ENCODE measurements at regions of chr13 and their contacts with region 1.

Region 1: GRCh38 chr13:24605923-24606372 is 74.3 kb upstream of the ATP12A start:
- DNase-seq: peak in 1 of 2 experiments; percentile 63
- H3K4me3 ChIP-seq: no peak overlapping the region
- H3K27ac ChIP-seq: no peak overlapping the region
- H3K4me1 ChIP-seq: peaks cover 0 to 3% (median 2%) of the 10 kb centered on the region in 4 experiments; a peak in 3 of 7 replicates
- H3K27me3 ChIP-seq: 0 out of 7 replicates have a peak, but pooled peaks cover 0 to 4% (median 0%) of the 10 kb centered on the region in 4 experiments
- CTCF ChIP-seq: peak in 2 of 3 experiments; percentile 31 to 53; a peak in 2 of 4 replicates
- EP300 ChIP-seq: no peak
- POLR2A ChIP-seq: 0 out of 3 replicates have a peak, but pooled peaks of 1 of the 2 experiments have one; percentile 32
- RAD21 ChIP-seq: peak; percentile 47 to 61; a peak in 3 of 4 replicates

Region 2: DNA sequence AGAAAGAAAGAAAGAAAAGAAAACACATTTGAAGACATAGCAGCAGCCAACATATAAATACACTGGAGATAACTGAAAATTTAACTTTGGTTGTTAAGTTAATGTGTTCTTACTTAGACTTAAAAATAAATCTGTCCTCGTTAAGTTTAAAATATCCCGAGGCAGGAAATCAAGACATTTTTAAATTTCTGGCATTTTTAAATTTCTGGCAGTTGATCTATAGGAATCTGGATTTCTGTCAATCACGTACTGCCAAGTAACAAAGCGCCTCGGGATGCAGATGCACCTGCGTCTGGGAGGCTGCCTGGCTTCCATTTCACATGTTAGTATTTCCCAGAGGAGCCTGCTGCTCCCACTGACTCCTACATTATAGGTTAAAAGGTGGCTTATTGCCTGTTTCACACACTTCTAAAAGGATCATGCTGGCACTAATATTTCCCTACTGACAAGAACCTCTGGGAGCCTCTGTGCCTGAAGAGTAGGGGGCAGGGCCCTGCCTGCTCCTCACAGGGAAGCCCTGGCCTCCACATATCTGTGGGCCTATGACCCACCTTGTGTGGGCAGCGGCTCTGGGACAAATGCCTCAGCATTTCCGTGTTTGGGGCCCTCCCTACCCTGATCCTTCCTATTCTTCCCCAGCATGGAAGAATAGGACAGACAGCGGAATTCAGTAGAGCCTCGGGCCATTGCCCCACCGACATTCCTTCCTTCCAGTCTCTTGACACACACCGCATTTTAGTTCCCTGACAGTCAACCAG is 11.5 kb after region 1 on chr13:
- CTCF ChIA-PET with region 1: interaction called, 141 read pairs
- POLR2A ChIA-PET with region 1: interaction called, 3 read pairs
- DNase-seq: no peak
- H3K4me3 ChIP-seq: no peak overlapping the region
- H3K27ac ChIP-seq: no peak overlapping the region
- H3K4me1 ChIP-seq: peaks cover 0 to 4% (median 0%) of the 10 kb centered on the region in 4 experiments; a peak in 3 of 7 replicates
- H3K27me3 ChIP-seq: no peaks in the 10 kb centered on the region
- CTCF ChIP-seq: no peak
- EP300 ChIP-seq: no peak
- POLR2A ChIP-seq: no peak
- RAD21 ChIP-seq: no peak

Region 3: DNA sequence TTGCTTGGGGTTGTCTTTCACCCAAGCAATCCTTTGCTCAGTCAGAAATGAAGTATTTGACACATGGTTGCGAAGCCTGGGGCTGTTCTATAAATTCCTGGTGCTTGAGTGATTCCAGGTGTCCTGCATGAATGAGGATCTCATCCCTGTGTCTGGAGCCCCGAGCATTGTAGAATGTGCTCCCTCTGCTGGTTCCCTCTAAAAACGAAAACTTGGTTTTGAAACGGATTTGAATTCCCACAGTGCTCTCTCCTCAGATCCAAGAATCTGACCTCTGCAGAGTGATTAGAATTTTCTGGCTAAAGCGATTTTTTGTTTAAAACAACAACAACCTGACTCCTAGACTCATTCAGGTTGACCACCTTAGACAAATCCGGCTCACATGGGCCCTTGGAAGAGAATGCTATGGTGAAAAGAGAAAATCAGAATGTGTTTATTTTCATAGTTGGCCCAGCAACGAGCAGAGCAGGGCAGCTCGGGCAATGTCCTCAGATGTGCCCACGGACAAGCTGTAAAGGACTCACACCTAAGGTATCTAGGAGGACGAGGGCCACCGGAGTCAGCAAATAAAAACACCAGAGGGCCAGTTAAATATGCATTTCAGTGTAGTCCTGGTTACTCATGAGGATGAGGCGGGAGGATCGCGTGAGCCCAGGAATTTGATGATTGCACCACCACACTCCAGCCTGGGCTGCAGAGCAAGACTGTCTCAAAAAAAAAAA is 65.6 kb after region 1 on chr13:
- CTCF ChIA-PET with region 1: interaction called, 24 read pairs
- POLR2A ChIA-PET with region 1: no interaction called
- DNase-seq: no peak
- H3K4me3 ChIP-seq: peak overlapping the region in 1 of 4 experiments; percentile 41; a peak in 3 of 8 replicates
- H3K27ac ChIP-seq: no peak overlapping the region
- H3K4me1 ChIP-seq: peaks cover 0 to 4% (median under 1%) of the 10 kb centered on the region in 4 experiments; a peak in 2 of 7 replicates
- H3K27me3 ChIP-seq: no peaks in the 10 kb centered on the region
- CTCF ChIP-seq: peak; percentile 17 to 79 (median 75)
- EP300 ChIP-seq: no peak
- POLR2A ChIP-seq: no peak
- RAD21 ChIP-seq: peak; percentile 57 to 67

Region 4: DNA sequence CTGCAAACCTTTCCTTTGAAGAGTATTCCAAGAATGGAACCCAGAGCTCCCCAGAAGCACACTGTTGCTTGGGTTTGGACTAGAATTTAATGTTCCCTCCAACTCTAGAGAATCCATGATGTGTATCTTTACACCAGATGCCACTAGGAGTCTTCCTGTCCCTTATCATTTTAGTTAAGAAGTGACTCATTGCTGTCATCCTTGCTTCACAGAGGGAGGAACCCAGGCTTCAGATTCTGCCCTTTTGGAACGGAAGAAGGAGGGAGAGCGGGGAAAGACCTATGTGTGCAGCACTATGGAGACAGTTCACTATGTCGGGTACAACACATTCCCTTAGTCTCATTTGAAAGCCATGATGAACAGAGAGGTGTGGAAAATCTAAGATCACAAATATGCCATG is 72.2 kb after region 1 on chr13:
- CTCF ChIA-PET with region 1: interaction called, 14 read pairs
- POLR2A ChIA-PET with region 1: no interaction called
- DNase-seq: no peak
- H3K4me3 ChIP-seq: no peak overlapping the region
- H3K27ac ChIP-seq: no peak overlapping the region
- H3K4me1 ChIP-seq: peaks cover 0 to 4% (median 1%) of the 10 kb centered on the region in 4 experiments; a peak in 3 of 7 replicates
- H3K27me3 ChIP-seq: peaks cover 3 to 22% (median 18%) of the 10 kb centered on the region in 4 experiments
- CTCF ChIP-seq: no peak
- EP300 ChIP-seq: no peak
- POLR2A ChIP-seq: no peak
- RAD21 ChIP-seq: no peak

Region 5: GRCh38 chr13:24683838-24684599 is 78.1 kb after region 1 on chr13:
- CTCF ChIA-PET with region 1: interaction called, 14 read pairs
- POLR2A ChIA-PET with region 1: no interaction called
- DNase-seq: peak in 1 of 2 experiments; percentile 88
- H3K4me3 ChIP-seq: peak overlapping the region in 1 of 4 experiments; percentile 11; a peak in 1 of 8 replicates
- H3K27ac ChIP-seq: no peak overlapping the region
- H3K4me1 ChIP-seq: peaks cover 8 to 14% (median 12%) of the 10 kb centered on the region in 4 experiments
- H3K27me3 ChIP-seq: peaks cover 3 to 22% (median 18%) of the 10 kb centered on the region in 4 experiments
- CTCF ChIP-seq: peak; percentile 80 to 96 (median 80)
- EP300 ChIP-seq: no peak
- POLR2A ChIP-seq: no peak
- RAD21 ChIP-seq: peak; percentile 58 to 69

Region 6: DNA sequence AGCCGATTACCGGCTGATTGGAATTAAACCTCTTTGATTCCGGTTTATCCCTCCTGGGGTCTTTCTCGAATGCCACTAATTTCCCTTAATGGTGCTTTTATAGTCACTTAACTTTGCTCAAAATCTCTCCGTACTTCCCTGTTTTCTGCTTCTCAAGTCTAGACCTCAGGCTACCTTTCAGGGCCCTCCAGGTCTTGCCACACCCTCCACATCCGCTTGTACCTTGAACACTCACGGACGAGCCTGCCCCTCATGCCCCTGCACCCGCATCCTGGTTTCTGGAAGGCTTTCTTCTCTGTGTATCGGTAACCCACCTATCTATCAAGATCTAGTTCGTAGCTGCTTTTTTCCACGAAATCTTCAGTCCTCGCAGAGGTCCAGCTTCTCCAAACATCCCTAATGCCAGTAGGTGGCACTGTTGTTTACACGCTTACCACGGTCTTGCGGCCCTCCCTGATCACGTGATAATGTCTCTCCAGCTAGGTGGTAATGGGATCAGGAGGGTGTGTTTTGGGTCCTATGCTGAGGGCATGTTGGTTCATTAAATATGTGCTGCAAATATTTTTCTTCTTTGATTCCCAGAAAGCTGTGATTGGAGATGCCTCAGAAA is 88.0 kb after region 1 on chr13:
- CTCF ChIA-PET with region 1: interaction called, 10 read pairs
- POLR2A ChIA-PET with region 1: no interaction called
- DNase-seq: peak in 1 of 2 experiments; percentile 75
- H3K4me3 ChIP-seq: no peak overlapping the region
- H3K27ac ChIP-seq: no peak overlapping the region
- H3K4me1 ChIP-seq: no peaks in the 10 kb centered on the region; a peak in 1 of 7 replicates
- H3K27me3 ChIP-seq: no peaks in the 10 kb centered on the region
- CTCF ChIP-seq: peak; percentile 75 to 93 (median 82)
- EP300 ChIP-seq: no peak
- POLR2A ChIP-seq: no peak
- RAD21 ChIP-seq: peak; percentile 81 to 88

Region 7: DNA sequence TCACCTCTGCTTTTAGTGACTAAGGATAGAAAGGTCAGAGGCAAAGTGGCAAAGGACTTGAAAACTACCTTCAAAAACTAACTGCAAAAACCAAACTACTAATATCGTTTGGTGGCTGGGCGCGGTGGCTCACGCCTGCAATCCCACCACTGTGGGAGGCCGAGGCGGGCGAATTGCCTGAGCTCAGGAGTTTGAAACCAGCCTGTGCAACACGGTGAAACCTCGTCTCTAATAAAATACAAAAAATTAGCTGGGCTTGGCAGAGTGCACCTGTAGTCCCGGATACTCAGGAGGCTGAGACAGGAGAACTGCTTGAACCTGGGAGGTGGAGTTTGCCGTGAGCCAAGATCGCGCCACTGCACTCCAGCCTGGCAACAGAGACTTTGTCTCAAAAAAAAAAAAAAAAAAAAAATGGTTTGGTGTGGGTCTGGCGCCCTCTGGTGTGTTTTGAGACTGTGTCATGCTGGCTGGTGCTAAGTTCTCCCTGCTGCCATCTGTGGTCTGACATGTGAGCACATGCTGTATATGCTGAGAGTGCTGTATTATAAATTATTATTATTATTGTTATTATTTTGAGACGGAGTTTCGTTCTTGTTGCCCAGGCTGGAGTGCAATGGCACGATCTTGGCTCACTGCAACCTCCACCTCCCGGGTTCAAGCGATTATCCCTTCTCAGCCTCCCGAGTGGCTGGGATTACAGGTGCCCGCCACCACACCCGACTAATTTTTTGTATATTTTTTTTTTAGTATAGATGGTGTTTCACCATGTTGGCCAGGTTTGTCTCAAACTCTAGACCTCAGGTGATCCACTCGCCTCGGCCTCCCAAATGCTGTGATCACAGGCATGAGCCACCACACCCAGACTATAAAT is 122.0 kb after region 1 on chr13:
- CTCF ChIA-PET with region 1: interaction called, 30 read pairs
- POLR2A ChIA-PET with region 1: no interaction called
- DNase-seq: peak in 1 of 2 experiments; percentile 63
- H3K4me3 ChIP-seq: no peak overlapping the region
- H3K27ac ChIP-seq: no peak overlapping the region
- H3K4me1 ChIP-seq: no peaks in the 10 kb centered on the region
- H3K27me3 ChIP-seq: no peaks in the 10 kb centered on the region
- CTCF ChIP-seq: peak; percentile 78 to 99 (median 78)
- EP300 ChIP-seq: no peak
- POLR2A ChIP-seq: no peak
- RAD21 ChIP-seq: peak; percentile 90 to 91

Region 8: GRCh38 chr13:24784319-24784718 is 178.4 kb after region 1 on chr13:
- CTCF ChIA-PET with region 1: no interaction called
- POLR2A ChIA-PET with region 1: no interaction called
- DNase-seq: no peak
- H3K4me3 ChIP-seq: no peak overlapping the region
- H3K27ac ChIP-seq: no peak overlapping the region
- H3K4me1 ChIP-seq: no peaks in the 10 kb centered on the region
- H3K27me3 ChIP-seq: peaks cover 0 to 1% (median 0%) of the 10 kb centered on the region in 4 experiments; a peak in 1 of 7 replicates
- CTCF ChIP-seq: no peak
- EP300 ChIP-seq: no peak
- POLR2A ChIP-seq: no peak
- RAD21 ChIP-seq: no peak

Measured in H1 (cell line).